ENCODE measurements at regions of chr3 and their contacts with region 1.

Region 1: DNA sequence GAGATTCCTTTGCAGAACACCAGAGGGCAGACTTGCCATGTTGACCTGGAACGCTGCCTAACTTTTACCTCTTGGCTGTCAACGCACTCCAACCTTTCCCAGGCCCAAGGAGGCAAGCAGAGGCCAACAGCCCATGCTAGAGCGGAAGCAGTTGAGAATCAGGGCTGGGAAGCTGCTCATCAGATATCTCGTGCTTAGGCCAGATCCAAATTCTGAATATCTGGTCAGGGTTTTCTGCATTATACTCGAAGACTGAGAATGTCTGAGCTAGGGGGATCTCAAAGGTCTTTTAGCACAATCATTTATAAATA is 2.5 kb downstream of the XIRP1 start:
- DNase-seq: peak; percentile 73
- ATAC-seq: peak; percentile 85
- H3K4me3 Mint-ChIP-seq: no peak overlapping the region
- H3K27ac Mint-ChIP-seq: no peak overlapping the region
- H3K4me1 Mint-ChIP-seq: 0 out of 2 replicates have a peak, but pooled peaks cover 4% of the 10 kb centered on the region
- H3K27me3 Mint-ChIP-seq: no peaks in the 10 kb centered on the region; the same call in 1 of the 2 replicates
- CTCF ChIP-seq: peak; percentile 63; the same call in 1 of the 2 replicates

Region 2: GRCh38 chr3:39146984-39147591 is 42.8 kb before region 1 on chr3:
- CTCF ChIA-PET with region 1: interaction called, 12 read pairs
- POLR2A ChIA-PET with region 1: no interaction called
- DNase-seq: no peak
- ATAC-seq: no peak
- H3K4me3 Mint-ChIP-seq: no peak overlapping the region
- H3K27ac Mint-ChIP-seq: peak overlapping the region; percentile 73
- H3K4me1 Mint-ChIP-seq: peaks cover 60% of the 10 kb centered on the region
- H3K27me3 Mint-ChIP-seq: no peaks in the 10 kb centered on the region
- CTCF ChIP-seq: no peak

Region 3: GRCh38 chr3:39249453-39250115 is 59.7 kb after region 1 on chr3:
- CTCF ChIA-PET with region 1: no interaction called
- POLR2A ChIA-PET with region 1: no interaction called
- DNase-seq: no peak
- ATAC-seq: no peak
- H3K4me3 Mint-ChIP-seq: no peak overlapping the region
- H3K27ac Mint-ChIP-seq: no peak overlapping the region
- H3K4me1 Mint-ChIP-seq: no peaks in the 10 kb centered on the region
- H3K27me3 Mint-ChIP-seq: no peaks in the 10 kb centered on the region
- CTCF ChIP-seq: no peak

Measured in WTC11 (cell line).